ENCODE measurements at regions of chr16 and their contacts with region 1.

Region 1: DNA sequence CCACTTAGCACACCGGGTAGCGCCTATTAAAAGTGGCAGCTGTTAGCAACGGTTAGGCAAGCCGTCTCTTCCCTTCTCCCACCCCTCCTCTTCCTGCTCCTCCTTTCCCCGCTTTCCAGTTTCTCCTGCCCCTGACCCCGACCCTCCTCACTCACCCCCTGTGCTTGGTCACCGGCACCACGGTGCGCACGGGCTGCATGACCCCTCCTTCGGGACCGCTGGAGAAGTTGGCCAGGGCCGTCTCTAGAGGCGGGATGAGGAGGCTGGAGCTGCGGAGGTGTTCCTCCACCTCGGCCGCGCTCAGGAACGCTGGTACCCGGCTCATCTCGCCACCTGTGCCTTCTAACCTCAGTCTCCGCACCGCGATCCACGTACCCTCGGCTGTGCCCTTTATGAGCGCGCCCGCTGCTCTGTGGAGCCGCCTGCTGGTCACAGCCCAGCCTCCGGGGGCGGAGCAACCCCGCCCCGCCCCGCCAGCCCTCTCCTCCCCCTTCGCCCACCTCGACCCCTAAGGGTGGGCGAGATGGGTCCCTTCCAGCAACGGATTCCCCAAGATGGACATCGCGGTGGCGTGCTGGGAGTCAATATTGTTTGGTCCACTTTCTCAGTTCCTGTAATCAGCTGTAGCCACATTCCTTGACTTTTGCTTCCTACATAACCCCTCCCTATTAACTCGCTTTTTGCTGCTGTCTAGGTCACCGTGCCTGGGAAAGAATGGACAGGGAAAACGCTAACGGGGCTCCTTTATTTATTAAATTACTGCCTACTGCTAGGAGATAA is at the start of gene CRYM:
- DNase-seq: peak; percentile 51 to 67

Region 2: GRCh38 chr16:21194771-21195301 is 83.3 kb before region 1 on chr16:
- in situ Hi-C with region 1: loop called (anchors 25 kb)
- DNase-seq: no peak